AG04449 (cell line): ENCODE measurements at regions of chr7 and their contacts with region 1.

Region 1: DNA sequence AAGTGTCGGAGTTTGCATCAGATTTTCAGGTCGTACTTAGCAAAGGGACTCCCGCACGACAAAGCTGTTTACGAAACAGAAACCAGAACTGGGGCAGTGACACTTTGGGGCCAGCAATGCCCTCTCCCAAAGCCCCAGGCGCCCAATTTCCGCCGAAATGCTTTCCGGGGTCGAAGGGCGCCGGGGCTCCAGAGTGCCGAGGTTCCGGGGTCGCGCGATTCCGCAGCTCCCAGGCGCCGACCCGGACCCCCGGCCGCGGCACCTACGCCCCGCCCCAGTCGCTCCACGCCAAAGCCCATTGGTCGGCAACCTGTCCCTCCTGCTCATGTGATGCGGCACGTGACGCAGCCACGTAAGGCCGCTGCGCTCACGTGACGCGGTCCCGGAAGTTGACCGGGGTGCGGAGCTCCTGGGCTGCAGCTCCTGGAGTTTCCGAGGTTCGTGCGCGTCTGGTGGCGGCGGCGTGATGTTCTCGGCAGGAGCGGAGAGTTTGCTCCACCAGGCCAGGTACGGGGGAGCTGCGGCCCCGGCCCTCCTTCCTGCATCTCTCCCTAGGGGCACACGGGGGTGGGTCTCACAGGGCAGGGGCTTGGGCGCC is at the start of gene AP5Z1:
- DNase-seq: peak; percentile 76
- H3K4me3 ChIP-seq: peak within 1 kb of the TSS; percentile 98
- CTCF ChIP-seq: no peak

Region 2: GRCh38 chr7:4791738-4792536 is 16.6 kb after region 1 on chr7:
- CTCF ChIA-PET with region 1: interaction called, 36 read pairs
- POLR2A ChIA-PET with region 1: interaction called, 10 read pairs
- DNase-seq: no peak
- H3K4me3 ChIP-seq: peak overlapping the region; percentile 33
- CTCF ChIP-seq: peak; percentile 80